HAP-1 (cell line): ENCODE measurements at regions of chr5 and their contacts with region 1.

Region 1: GRCh38 chr5:76402886-76403765 is at the start of gene IQGAP2:
- DNase-seq: peak; percentile 78 to 86
- H3K4me3 ChIP-seq: peak within 1 kb of the TSS; percentile 61
- H3K4me1 ChIP-seq: peaks cover 5% of the 10 kb centered on the region
- H3K27me3 ChIP-seq: 0 out of 2 replicates have a peak, but pooled peaks cover 3% of the 10 kb centered on the region

Region 2: GRCh38 chr5:76544268-76544926 is 141.3 kb after region 1 on chr5:
- in situ Hi-C with region 1: loop called (anchors 10 kb)
- DNase-seq: peak; percentile 31 to 51
- H3K4me3 ChIP-seq: no peak overlapping the region
- H3K4me1 ChIP-seq: no peaks in the 10 kb centered on the region
- H3K27me3 ChIP-seq: no peaks in the 10 kb centered on the region